Activated CD4-positive, alpha-beta T cell treated with anti-CD3 and anti-CD28 coated beads, Interleukin-2, amount 10 ng/mL, durations not matched to agents 24 days and 14 days (primary cell): ENCODE measurements at regions of chr15 and their contacts with region 1.

Region 1: DNA sequence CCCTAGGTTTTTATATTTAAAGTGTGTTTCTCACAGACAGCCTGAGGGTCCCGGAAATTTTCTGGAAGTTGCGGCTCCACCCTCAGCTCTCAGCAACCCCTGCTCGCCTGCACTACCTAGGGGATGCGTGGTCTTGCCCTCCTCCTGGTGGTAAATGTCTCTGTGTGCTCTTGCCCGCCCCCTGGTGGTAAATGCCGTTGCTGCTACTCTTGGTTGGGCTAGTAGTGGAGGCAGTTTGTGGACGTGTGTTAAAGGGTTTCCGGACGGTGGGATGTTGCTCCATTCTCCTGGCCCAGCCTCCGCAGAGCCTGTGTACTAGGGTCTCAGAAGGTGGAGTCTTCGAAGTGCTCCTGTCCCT is 27.4 kb downstream of the STOML1 start:
- DNase-seq: peak; percentile 96
- H3K4me3 Mint-ChIP-seq: peak overlapping the region; percentile 72
- H3K27ac Mint-ChIP-seq: peak overlapping the region; percentile 92
- H3K4me1 Mint-ChIP-seq: peaks cover 32% of the 10 kb centered on the region
- H3K27me3 Mint-ChIP-seq: peaks cover 6% of the 10 kb centered on the region

Region 2: DNA sequence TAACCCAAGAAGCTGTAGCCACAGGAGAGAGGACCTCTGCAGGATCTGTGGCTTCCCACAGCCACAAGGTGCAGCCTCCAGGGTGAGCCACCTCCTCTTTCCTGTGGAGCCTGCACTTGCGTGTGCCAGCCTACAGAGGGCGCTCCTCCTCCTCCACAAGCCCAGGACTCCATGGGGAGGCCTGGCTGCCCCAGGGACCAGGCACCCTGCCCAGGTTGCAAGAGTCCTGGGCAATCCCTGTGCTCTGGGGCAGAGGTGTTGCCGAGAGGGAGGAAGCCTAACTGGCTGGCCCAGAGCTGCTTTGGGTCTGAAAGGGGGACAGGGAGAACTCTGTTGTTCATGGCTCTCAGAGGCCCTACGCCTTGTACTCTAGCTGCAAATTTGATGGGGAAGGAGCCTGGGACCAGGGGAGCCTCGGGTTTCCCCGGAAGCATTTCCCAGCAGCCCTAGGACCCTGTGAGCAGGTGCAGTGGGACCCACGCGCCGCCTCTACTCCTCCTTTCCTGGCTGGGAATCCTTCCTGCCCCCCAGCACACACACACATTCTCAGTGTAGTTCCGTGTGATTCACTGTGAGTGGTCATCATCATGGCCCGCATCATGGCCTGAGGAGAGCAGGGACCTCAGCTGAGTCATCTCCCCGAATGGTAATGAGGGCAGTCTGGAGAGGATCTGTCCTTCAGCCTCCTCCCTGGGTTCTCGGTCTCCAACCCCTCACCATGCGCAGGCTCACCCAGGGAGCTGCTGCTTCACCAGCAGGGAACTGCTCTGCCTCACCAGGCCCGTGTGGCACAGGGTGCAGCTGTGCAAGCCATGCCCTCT is 67.1 kb before region 1 on chr15:
- intact Hi-C with region 1: loop called (anchors 1 kb)
- DNase-seq: peak; percentile 91
- H3K4me3 Mint-ChIP-seq: no peak overlapping the region
- H3K27ac Mint-ChIP-seq: no peak overlapping the region
- H3K4me1 Mint-ChIP-seq: no peaks in the 10 kb centered on the region
- H3K27me3 Mint-ChIP-seq: peaks cover 5% of the 10 kb centered on the region

Region 3: DNA sequence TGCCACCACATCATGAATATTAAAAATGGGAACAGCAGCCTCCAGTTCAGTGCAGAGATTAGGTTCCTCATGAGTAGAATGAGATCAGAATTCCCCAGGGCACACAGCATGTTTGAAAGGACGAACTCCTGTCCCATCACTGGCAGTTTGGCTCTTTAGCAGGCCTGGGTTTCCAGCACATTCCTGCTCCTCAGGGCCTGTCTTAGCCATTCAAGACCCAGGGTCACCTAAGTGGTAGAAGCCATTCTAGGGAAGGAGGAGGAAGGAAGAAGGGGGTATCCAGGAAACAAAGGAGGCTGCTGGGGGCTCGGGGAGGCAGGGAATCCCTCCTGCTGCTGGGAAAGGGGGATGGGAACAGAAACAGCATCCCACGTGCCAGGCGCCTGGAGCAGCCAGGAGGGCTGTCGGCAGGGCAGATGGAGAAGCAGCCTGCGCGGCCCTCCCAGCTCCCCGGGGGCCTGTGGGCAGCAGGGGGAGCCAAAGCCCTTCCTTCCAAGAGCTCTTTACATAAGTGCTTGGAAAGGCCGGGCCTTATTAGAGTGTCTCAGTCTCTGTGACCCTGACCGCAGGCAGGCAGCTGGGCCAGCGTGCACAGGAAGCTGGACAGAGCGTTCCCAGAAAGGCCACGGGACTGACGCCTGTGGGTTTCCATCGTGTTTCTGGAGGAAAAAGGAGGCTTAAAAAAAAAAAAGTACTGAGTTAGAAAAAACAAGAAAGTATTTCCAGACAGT is 13.7 kb before region 1 on chr15:
- intact Hi-C with region 1: loop called (anchors 1 kb)
- DNase-seq: peak; percentile 93
- H3K4me3 Mint-ChIP-seq: peak overlapping the region; percentile 31
- H3K27ac Mint-ChIP-seq: peak overlapping the region; percentile 69
- H3K4me1 Mint-ChIP-seq: peaks cover 4% of the 10 kb centered on the region
- H3K27me3 Mint-ChIP-seq: peaks cover under 1% of the 10 kb centered on the region